Activated T-helper 1 cell treated with anti-CD3 and anti-CD28 coated beads, Interleukin-12 subunit alpha, Interleukin-12 subunit beta, Interleukin-2, Interleukin-4 antibody, amounts not matched to agents 30 ng/mL and 10 ng/mL and 1 ng/mL, durations not matched to agents 14 hours and 24 hours and 36 hours (primary cell): ENCODE measurements at regions of chr18 and their contacts with region 1.

Region 1: GRCh38 chr18:69898241-69898861 is 49.3 kb downstream of the CD226 start:
- DNase-seq: no peak
- H3K4me3 Mint-ChIP-seq: peak overlapping the region; percentile 78
- H3K27ac Mint-ChIP-seq: peak overlapping the region; percentile 97
- H3K4me1 Mint-ChIP-seq: peaks cover 78% of the 10 kb centered on the region
- H3K27me3 Mint-ChIP-seq: no peaks in the 10 kb centered on the region

Region 2: GRCh38 chr18:69845593-69846506 is 52.5 kb before region 1 on chr18:
- intact Hi-C with region 1: no loop called
- DNase-seq: no peak
- H3K4me3 Mint-ChIP-seq: no peak overlapping the region
- H3K27ac Mint-ChIP-seq: no peak overlapping the region
- H3K4me1 Mint-ChIP-seq: no peaks in the 10 kb centered on the region
- H3K27me3 Mint-ChIP-seq: peaks cover 2% of the 10 kb centered on the region

Region 3: GRCh38 chr18:69916412-69916811 is 18.1 kb after region 1 on chr18:
- intact Hi-C with region 1: loop called (anchors 2 kb)
- DNase-seq: no peak
- H3K4me3 Mint-ChIP-seq: no peak overlapping the region
- H3K27ac Mint-ChIP-seq: no peak overlapping the region
- H3K4me1 Mint-ChIP-seq: peaks cover 61% of the 10 kb centered on the region
- H3K27me3 Mint-ChIP-seq: no peaks in the 10 kb centered on the region

Region 4: GRCh38 chr18:69958422-69958821 is 60.1 kb after region 1 on chr18:
- intact Hi-C with region 1: loop called (anchors 1 kb)
- DNase-seq: no peak
- H3K4me3 Mint-ChIP-seq: no peak overlapping the region
- H3K27ac Mint-ChIP-seq: no peak overlapping the region
- H3K4me1 Mint-ChIP-seq: peaks cover 16% of the 10 kb centered on the region
- H3K27me3 Mint-ChIP-seq: peaks cover 1% of the 10 kb centered on the region